ENCODE measurements at regions of chr5 and their contacts with region 1.

Region 1: GRCh38 chr5:43066799-43067741 is 27.0 kb upstream of the ANXA2R start:
- DNase-seq: peak; percentile 91
- H3K4me3 ChIP-seq: peak overlapping the region; percentile 24 to 76 (median 76)
- H3K27ac ChIP-seq: peak overlapping the region; percentile 86
- H3K4me1 ChIP-seq: peaks cover 24% of the 10 kb centered on the region
- H3K27me3 ChIP-seq: no peaks in the 10 kb centered on the region
- CTCF ChIP-seq: no peak
- POLR2A ChIP-seq: peak; percentile 73

Region 2: GRCh38 chr5:42950440-42951292 is 116.4 kb before region 1 on chr5:
- CTCF ChIA-PET with region 1: interaction called, 11 read pairs
- POLR2A ChIA-PET with region 1: no interaction called
- dilution Hi-C with region 1: no loop called
- intact Hi-C with region 1: loop called (anchors 1 kb)
- DNase-seq: peak; percentile 98
- H3K4me3 ChIP-seq: peak overlapping the region; percentile 11 to 55 (median 49)
- H3K27ac ChIP-seq: peak overlapping the region; percentile 99
- H3K4me1 ChIP-seq: peaks cover 17% of the 10 kb centered on the region
- H3K27me3 ChIP-seq: no peaks in the 10 kb centered on the region
- CTCF ChIP-seq: no peak
- POLR2A ChIP-seq: peak; percentile 86

Region 3: DNA sequence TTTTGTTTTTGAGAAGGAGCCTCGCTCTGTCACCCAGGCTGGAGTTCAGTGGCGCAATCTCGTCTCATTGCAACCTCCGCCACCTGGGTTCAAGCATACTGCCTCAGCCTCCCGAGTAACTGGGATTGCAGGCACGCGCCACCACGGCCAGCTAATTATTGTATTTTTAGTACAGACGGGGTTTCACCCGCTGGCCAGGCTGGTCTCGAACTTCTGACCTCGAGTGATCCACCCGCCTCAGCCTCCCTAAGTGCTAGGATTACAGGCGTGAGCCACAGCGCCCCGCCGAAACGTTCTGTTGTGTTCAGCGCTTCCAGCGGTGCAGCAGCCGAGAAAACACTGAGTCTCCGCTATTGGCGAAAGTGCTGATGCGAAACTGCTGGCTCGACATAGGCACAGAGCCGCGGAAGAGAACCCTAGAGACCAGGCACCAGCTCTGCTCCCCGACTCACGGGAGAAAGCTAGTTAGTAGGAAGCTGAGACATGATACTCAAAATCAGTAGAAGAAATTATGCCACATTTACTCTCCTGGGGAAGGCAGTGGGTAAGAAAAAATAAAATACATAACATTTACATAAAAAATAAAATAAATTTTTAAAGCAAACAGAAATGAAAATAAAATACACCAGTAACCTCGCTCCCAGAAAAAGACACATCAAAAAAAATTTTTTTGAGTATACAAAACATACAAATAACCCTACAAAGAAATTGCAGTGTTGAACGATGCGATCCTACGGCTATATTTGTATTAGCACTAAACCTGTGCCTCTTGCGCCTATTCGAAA is 58.5 kb before region 1 on chr5:
- CTCF ChIA-PET with region 1: interaction called, 7 read pairs
- POLR2A ChIA-PET with region 1: no interaction called
- dilution Hi-C with region 1: no loop called
- intact Hi-C with region 1: loop called (anchors 1 kb)
- DNase-seq: peak; percentile 96
- H3K4me3 ChIP-seq: peak overlapping the region; percentile 45 to 77 (median 75)
- H3K27ac ChIP-seq: peak overlapping the region; percentile 90
- H3K4me1 ChIP-seq: peaks cover 26% of the 10 kb centered on the region
- H3K27me3 ChIP-seq: no peaks in the 10 kb centered on the region
- CTCF ChIP-seq: peak in 1 of 2 donors; percentile 28
- POLR2A ChIP-seq: peak; percentile 66

Region 4: GRCh38 chr5:43040287-43041098 is 26.6 kb before region 1 on chr5 and contains the start of gene ANXA2R:
- CTCF ChIA-PET with region 1: interaction called, 63 read pairs
- POLR2A ChIA-PET with region 1: no interaction called
- dilution Hi-C with region 1: no loop called
- intact Hi-C with region 1: loop called (anchors 1 kb)
- DNase-seq: peak; percentile 97
- H3K4me3 ChIP-seq: peak within 1 kb of the TSS; percentile 51 to 87 (median 54)
- H3K27ac ChIP-seq: peak within 1 kb of the TSS; percentile 77
- H3K4me1 ChIP-seq: peaks cover 30% of the 10 kb centered on the region
- H3K27me3 ChIP-seq: no peaks in the 10 kb centered on the region
- CTCF ChIP-seq: peak; percentile 81 to 86
- POLR2A ChIP-seq: no peak
- total RNA-seq, gene ANXA2R: 6.6 and 8.1 TPM in 2 replicates

Region 5: DNA sequence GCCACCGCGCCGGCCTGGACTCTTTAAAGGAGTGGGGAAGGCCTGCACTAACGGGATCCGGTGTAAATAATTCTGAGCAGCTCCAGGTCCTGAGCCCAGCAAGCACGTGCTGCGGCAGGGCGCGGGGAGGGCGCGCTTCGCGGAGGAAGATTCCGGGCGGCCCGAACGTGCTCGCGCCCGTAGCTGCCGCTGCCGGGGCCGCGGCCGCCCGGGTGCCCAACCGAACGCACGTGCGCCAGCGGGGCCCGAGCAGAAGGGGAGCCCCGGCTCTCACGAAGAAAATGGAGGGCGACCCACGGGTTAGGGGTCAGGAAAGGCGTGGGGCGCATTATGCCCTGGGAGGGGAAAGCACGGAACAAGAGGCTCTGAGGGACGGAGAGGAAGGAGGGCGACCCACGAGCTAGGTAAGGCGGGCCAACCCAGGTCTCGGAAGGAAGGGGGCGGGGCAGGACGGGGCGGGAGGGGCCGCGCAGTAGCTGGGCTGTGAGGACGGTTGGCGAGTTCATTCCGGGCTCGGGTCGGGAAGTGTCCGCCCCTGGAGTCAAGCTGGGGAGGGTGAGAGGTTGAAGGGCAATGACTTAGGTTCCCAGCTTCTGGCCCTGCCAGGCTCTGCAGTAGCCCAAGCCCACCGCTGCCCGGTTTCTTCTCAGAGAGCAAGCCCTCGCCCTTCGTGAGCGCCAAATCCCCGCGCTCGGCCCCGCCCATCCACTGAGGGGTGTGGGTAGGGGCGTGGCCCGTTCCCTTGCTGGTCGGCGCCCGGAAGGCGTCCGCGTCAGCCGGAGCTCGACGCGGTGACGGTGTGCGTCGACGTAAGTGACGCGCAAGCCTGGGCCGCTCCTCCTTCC is 53.9 kb after region 1 on chr5 and contains the start of gene ZNF131:
- CTCF ChIA-PET with region 1: interaction called, 3 read pairs
- POLR2A ChIA-PET with region 1: interaction called, 7 read pairs
- dilution Hi-C with region 1: no loop called
- intact Hi-C with region 1: loop called (anchors 2 kb)
- DNase-seq: peak; percentile 97
- H3K4me3 ChIP-seq: peak within 1 kb of the TSS; percentile 73 to 90 (median 79)
- H3K27ac ChIP-seq: peak within 1 kb of the TSS; percentile 81
- H3K4me1 ChIP-seq: peaks cover 17% of the 10 kb centered on the region
- H3K27me3 ChIP-seq: no peaks in the 10 kb centered on the region
- CTCF ChIP-seq: no peak
- POLR2A ChIP-seq: peak; percentile 94
- total RNA-seq, gene ZNF131: 30.1 and 31.2 TPM in 2 replicates

Measured in endothelial cell of umbilical vein (primary cell).